Activated T-helper 1 cell treated with anti-CD3 and anti-CD28 coated beads, Interleukin-12 subunit alpha, Interleukin-12 subunit beta, Interleukin-2, Interleukin-4 antibody, amounts not matched to agents 30 ng/mL and 10 ng/mL and 1 ng/mL, durations not matched to agents 14 hours and 24 hours and 36 hours (primary cell): ENCODE measurements at regions of chr18 and their contacts with region 1.

Region 1: GRCh38 chr18:76398896-76399612 is 96.0 kb downstream of the ZNF516 start:
- DNase-seq: peak; percentile 61
- H3K4me3 Mint-ChIP-seq: no peak overlapping the region
- H3K27ac Mint-ChIP-seq: no peak overlapping the region
- H3K4me1 Mint-ChIP-seq: peaks cover 6% of the 10 kb centered on the region
- H3K27me3 Mint-ChIP-seq: peaks cover 18% of the 10 kb centered on the region

Region 2: DNA sequence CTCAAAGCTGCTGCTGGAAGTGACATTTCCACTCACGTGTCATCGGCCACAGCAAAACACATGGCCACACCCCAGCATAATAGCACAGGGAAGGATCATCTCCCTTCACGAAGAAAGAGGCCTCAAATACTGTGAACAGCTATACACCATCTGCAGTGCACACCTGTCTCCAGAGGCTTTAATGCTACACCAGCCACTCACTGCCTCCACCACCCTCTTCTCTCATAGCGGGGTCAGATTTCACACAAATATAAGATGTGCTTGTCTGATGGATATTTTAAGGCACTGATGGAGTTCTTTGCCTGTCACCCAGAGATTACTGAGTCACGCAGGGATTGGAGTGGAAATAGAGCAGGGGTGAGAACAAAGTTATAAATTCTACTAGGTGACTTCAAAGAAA is 278.0 kb before region 1 on chr18:
- intact Hi-C with region 1: no loop called
- DNase-seq: no peak
- H3K4me3 Mint-ChIP-seq: no peak overlapping the region
- H3K27ac Mint-ChIP-seq: no peak overlapping the region
- H3K4me1 Mint-ChIP-seq: no peaks in the 10 kb centered on the region
- H3K27me3 Mint-ChIP-seq: peaks cover 1% of the 10 kb centered on the region

Region 3: DNA sequence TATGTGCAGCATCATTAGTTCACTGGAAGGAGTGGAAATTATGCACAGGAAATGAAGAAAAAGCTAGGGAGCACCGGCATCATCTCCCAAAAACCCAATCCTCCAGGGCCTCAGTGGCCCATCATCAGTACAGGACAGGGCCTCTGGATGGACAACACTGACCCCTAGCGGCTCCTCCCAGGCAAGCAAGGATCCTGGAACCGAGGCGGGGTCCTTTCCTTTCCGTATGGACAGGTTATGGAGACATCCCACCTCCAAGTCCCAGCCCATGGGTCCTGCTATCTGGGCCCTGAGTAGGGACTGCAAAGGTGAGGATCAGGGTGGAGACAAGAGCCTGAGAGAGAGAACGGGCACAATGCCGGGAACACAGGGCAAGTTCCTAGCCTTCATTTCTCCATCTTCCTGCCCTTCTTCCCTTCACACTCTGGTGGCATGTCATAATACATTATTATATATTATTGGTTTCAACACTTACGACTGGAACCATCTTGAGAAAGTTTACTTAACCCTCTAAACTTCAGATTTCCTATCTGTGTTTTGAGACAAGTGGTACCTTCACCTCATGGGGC is 27.8 kb after region 1 on chr18:
- intact Hi-C with region 1: loop called (anchors 1 kb)
- DNase-seq: no peak
- H3K4me3 Mint-ChIP-seq: no peak overlapping the region
- H3K27ac Mint-ChIP-seq: no peak overlapping the region
- H3K4me1 Mint-ChIP-seq: no peaks in the 10 kb centered on the region
- H3K27me3 Mint-ChIP-seq: peaks cover 6% of the 10 kb centered on the region

Region 4: DNA sequence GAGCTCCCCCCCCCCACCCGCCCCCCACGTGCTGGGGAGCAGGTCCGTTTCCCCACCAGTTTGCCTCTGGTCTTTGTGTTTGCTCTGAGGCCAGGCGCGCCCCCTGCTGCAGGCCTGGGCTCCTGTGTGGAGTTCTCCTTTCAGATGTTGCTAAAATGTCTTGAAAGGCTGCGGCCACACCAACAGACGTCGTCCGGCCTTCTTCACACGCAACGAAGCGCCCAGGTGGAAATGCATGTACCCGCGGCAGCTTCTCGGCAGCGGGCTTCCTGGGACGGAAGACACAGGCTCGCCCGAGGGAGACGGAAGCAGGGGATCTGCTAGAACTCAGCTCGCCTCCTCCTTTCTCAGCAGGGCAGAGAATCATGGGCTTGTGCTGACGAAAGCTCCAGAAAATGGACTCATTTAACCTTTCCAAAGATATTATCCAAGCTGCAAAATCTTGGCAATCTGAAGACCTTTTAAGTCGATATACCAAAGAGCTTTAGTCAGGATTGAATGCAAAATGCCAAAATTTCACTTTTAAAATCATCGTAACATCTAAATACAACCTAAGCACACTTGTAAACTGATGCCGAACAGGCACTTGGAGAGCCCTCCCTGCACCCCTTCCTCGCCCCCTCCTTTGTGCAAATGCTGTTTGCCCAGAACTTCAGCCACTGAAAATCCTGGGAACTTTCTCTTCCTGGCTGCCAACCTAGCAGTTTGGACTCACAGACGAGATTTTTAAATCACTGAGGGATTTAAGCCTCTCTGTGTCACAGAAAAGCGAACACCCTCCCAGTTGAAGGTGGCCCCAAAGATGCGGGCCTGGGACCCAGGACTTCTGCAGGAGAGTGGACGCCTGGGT is 221.5 kb after region 1 on chr18:
- intact Hi-C with region 1: loop called (anchors 1 kb)
- DNase-seq: no peak
- H3K4me3 Mint-ChIP-seq: no peak overlapping the region
- H3K27ac Mint-ChIP-seq: no peak overlapping the region
- H3K4me1 Mint-ChIP-seq: peaks cover 12% of the 10 kb centered on the region
- H3K27me3 Mint-ChIP-seq: peaks cover 23% of the 10 kb centered on the region

Region 5: GRCh38 chr18:76686737-76687262 is 287.7 kb after region 1 on chr18:
- intact Hi-C with region 1: loop called (anchors 1 kb)
- DNase-seq: no peak
- H3K4me3 Mint-ChIP-seq: no peak overlapping the region
- H3K27ac Mint-ChIP-seq: peak overlapping the region; percentile 71
- H3K4me1 Mint-ChIP-seq: peaks cover 14% of the 10 kb centered on the region
- H3K27me3 Mint-ChIP-seq: peaks cover 18% of the 10 kb centered on the region

Region 6: GRCh38 chr18:76709659-76710645 is 310.9 kb after region 1 on chr18:
- intact Hi-C with region 1: loop called (anchors 1 kb)
- DNase-seq: peak; percentile 49
- H3K4me3 Mint-ChIP-seq: no peak overlapping the region
- H3K27ac Mint-ChIP-seq: no peak overlapping the region
- H3K4me1 Mint-ChIP-seq: peaks cover 19% of the 10 kb centered on the region
- H3K27me3 Mint-ChIP-seq: peaks cover 11% of the 10 kb centered on the region